Prostate gland (tissue), 2 donors: ENCODE measurements at regions of chr5 and their contacts with region 1.

Region 1: GRCh38 chr5:81233080-81233634 is at the start of gene CKMT2:
- DNase-seq: peak; percentile 49
- H3K4me3 ChIP-seq: peak within 1 kb of the TSS; percentile 20 to 32
- H3K27ac ChIP-seq: peak within 1 kb of the TSS; percentile 13 to 67
- H3K4me1 ChIP-seq: no peaks in the 10 kb centered on the region
- H3K27me3 ChIP-seq: no peaks in the 10 kb centered on the region
- CTCF ChIP-seq: no peak
- POLR2A ChIP-seq: no peak
- total RNA-seq, gene CKMT2: 9.8 to 25.4 TPM

Region 2: DNA sequence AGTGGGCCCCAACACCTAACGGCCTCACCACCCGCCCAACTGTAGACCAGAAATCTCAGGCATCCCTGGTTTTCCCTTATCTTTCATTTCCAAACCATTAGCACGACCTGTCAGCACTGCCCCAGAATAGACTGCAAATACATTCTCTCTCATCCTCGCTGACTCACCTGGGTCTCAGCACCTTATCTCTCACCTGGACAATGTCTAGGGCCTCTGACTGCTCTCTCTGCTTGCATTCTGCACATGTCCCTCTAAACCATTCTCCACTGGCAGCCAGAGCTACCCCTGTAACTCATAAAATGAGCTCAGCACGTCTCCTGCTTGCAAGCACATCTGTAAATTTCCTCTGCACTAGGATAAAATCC is 12.7 kb after region 1 on chr5:
- intact Hi-C with region 1: loop called (anchors 2 kb)
- DNase-seq: no peak
- H3K4me3 ChIP-seq: no peak overlapping the region
- H3K27ac ChIP-seq: no peak overlapping the region
- H3K4me1 ChIP-seq: no peaks in the 10 kb centered on the region
- H3K27me3 ChIP-seq: no peaks in the 10 kb centered on the region
- CTCF ChIP-seq: no peak
- POLR2A ChIP-seq: no peak

Region 3: DNA sequence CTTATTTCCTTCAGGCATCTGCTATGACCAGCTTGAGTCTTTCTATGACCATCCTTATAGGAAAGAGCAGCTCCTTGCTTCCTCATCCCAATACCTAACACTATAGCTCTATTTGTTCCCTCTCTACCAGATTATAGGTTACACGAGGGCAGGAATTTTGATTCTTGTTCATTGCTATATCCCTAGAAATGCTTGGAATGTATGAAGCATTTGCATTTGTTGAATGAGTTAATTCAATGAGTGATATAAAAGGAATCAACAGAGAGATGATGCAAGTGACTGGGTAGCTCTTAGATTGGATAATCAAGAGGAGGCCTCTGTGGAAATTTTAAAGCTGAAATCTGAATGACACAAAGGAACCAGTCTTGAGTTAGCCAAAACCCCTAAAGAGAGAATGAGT is 82.2 kb after region 1 on chr5:
- intact Hi-C with region 1: no loop called
- DNase-seq: no peak
- H3K4me3 ChIP-seq: no peak overlapping the region
- H3K27ac ChIP-seq: no peak overlapping the region
- H3K4me1 ChIP-seq: no peaks in the 10 kb centered on the region
- H3K27me3 ChIP-seq: no peaks in the 10 kb centered on the region
- CTCF ChIP-seq: no peak
- POLR2A ChIP-seq: no peak